SK-N-SH (cell line): ENCODE measurements at regions of chr1 and their contacts with region 1.

Region 1: DNA sequence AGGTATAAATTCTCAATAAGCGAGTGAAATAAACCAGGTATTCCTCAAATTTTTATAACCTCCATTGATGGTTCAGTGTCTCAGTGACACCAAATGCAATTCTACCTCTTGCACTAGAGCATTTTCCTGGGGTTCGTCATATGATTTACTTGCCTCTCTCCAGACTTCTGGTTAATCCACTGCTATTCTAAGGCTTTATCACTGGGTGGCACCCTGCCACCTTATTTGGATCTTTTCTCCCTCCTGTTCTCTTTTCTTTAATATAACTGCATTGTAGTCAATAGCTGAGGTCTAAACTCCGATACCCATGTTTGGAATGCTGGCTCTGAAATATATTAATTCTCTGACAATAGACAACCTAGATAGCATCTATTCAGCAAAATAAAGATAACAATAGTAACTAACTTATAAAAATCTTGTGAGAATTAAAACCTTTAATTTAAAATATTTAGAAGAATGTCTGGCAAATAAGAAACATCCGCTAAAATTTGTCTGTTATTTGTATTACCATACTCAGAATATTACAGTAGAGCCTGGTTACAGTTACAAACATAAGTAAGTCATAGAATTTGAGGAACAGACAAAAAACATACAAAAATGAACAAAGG is 436.4 kb downstream of the PLA2G4A start:
- DNase-seq: peak; percentile 32
- H3K4me3 ChIP-seq: peak overlapping the region in 1 of 2 experiments; percentile 8; a peak in 1 of 4 replicates
- H3K27ac ChIP-seq: no peak overlapping the region
- H3K4me1 ChIP-seq: peaks cover 0 to 4% of the 10 kb centered on the region in 2 experiments; a peak in 2 of 4 replicates
- H3K27me3 ChIP-seq: no peaks in the 10 kb centered on the region
- CTCF ChIP-seq: peak; percentile 81
- EP300 ChIP-seq: no peak
- RAD21 ChIP-seq: peak; percentile 97

Region 2: GRCh38 chr1:187051618-187052232 is 213.4 kb before region 1 on chr1:
- CTCF ChIA-PET with region 1: interaction called, 15 read pairs
- POLR2A ChIA-PET with region 1: no interaction called
- DNase-seq: peak; percentile 16
- H3K4me3 ChIP-seq: no peak overlapping the region
- H3K27ac ChIP-seq: no peak overlapping the region
- H3K4me1 ChIP-seq: peaks cover 0 to 4% of the 10 kb centered on the region in 2 experiments; a peak in 2 of 4 replicates
- H3K27me3 ChIP-seq: no peaks in the 10 kb centered on the region
- CTCF ChIP-seq: peak; percentile 76
- EP300 ChIP-seq: no peak
- RAD21 ChIP-seq: peak; percentile 84

Region 3: GRCh38 chr1:187078321-187078720 is 186.8 kb before region 1 on chr1:
- CTCF ChIA-PET with region 1: no interaction called
- POLR2A ChIA-PET with region 1: no interaction called
- DNase-seq: no peak
- H3K4me3 ChIP-seq: no peak overlapping the region
- H3K27ac ChIP-seq: no peak overlapping the region
- H3K4me1 ChIP-seq: no peaks in the 10 kb centered on the region; a peak in 1 of 4 replicates
- H3K27me3 ChIP-seq: no peaks in the 10 kb centered on the region
- CTCF ChIP-seq: no peak
- EP300 ChIP-seq: no peak
- RAD21 ChIP-seq: no peak

Region 4: GRCh38 chr1:187275346-187275745 is 10.2 kb after region 1 on chr1:
- CTCF ChIA-PET with region 1: interaction called, 11 read pairs
- POLR2A ChIA-PET with region 1: no interaction called
- DNase-seq: no peak
- H3K4me3 ChIP-seq: no peak overlapping the region
- H3K27ac ChIP-seq: no peak overlapping the region
- H3K4me1 ChIP-seq: peaks cover 0 to 7% of the 10 kb centered on the region in 2 experiments; a peak in 1 of 4 replicates
- H3K27me3 ChIP-seq: no peaks in the 10 kb centered on the region
- CTCF ChIP-seq: no peak
- EP300 ChIP-seq: no peak
- RAD21 ChIP-seq: no peak